ENCODE measurements at regions of chr16 and their contacts with region 1.

Region 1: GRCh38 chr16:11356573-11357331 is 11.5 kb downstream of the RMI2 start:
- DNase-seq: peak in 4 of 5 donors; percentile 40 to 48 (median 44)
- H3K4me3 ChIP-seq: no peak overlapping the region
- H3K4me3 Mint-ChIP-seq: no peak overlapping the region
- H3K27ac ChIP-seq: no peak overlapping the region
- H3K27ac Mint-ChIP-seq: peak overlapping the region in 4 of 7 donors; percentile 11 to 56 (median 38)
- H3K4me1 ChIP-seq: peaks cover 47% of the 10 kb centered on the region
- H3K4me1 Mint-ChIP-seq: peaks cover 37 to 74% (median 50%) of the 10 kb centered on the region in 4 donors
- H3K27me3 ChIP-seq: no peaks in the 10 kb centered on the region
- H3K27me3 Mint-ChIP-seq: peaks cover 4 to 16% of the 10 kb centered on the region in 2 donors

Region 2: DNA sequence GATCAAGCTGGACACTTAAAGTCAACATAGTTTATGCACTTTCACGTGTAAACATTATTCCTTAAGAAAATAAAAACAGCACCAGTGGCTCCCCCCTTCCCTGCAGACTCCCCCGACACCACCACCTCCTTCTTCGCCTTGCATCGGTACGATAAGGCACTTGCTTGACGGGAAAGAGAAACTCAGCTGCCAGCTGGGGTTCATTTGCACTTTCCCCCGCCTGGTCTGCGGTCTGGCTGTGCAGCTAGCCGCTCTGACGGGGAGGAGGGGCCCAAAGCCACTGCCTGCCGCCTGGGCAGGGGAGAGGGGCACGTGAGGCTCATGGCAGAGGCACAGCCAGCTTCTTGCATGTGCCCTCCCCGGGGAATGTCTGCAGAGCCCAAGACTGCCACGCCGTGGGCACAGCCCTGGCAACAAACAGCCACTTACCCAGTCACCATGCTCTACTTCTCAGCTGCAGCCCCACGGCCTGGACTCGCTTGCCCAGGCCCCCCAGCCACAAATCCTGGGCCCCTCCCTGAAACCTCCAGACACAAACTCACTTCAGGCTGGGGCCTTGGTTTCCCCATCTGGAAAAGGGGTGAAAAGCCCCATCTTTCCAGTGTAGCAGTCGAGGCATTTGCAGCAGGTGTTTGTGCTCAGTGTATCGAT is 59.1 kb before region 1 on chr16:
- CTCF ChIA-PET with region 1: interaction called, 9 read pairs
- POLR2A ChIA-PET with region 1: interaction called, 3 read pairs
- intact Hi-C with region 1: loop called (anchors 1 kb)
- DNase-seq: peak; percentile 59 to 82 (median 62)
- H3K4me3 ChIP-seq: peak overlapping the region in 1 of 2 donors; percentile 29
- H3K4me3 Mint-ChIP-seq: peak overlapping the region; percentile 68 to 86 (median 78)
- H3K27ac ChIP-seq: no peak overlapping the region
- H3K27ac Mint-ChIP-seq: peak overlapping the region; percentile 6 to 74 (median 46)
- H3K4me1 ChIP-seq: peaks cover 16% of the 10 kb centered on the region
- H3K4me1 Mint-ChIP-seq: peaks cover 12 to 16% (median 13%) of the 10 kb centered on the region in 4 donors
- H3K27me3 ChIP-seq: no peaks in the 10 kb centered on the region
- H3K27me3 Mint-ChIP-seq: peaks cover 0 to 2% of the 10 kb centered on the region in 2 donors

Region 3: DNA sequence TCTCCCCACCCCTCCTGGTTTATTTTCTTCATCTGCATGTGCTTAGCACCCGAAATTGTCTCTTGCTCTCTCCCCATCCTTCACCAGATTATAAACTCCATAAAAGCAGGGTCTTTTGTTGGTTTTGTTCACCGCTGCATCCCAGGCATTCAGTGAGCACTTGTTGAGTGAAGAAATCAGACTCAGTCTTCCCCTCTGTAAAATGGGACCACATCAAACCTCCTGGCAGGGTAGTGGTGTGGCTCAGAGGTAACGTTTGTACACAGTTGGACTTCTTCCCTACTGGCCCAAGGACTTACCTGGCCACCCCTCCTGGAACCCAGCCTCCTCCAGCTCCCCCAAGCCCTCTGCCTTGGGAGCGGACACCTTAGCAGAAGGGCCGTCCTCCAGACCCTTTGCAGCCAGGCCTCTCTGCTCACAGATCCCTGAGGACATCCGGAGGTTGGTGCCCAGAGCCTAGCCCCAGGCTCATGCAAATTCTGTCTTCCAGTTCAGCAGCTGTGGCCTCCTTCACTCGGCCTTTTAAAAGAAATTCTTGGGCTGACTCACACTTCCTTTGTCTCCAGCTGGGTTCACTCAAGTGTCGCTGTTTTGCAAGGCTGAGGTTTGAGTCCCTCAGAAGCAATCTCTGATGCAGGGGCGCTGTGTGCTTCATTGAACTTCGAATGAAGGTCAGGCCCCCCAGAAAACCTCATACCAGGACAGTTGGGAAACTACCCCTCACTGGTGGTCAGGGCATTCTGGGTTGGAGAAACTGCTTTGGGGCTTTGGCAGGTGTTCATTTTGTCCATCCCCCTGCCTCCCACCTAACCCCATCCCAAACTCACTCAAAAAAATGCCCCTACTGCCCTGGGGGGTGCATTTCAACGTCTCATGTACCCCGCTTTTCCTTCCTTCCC is 28.3 kb before region 1 on chr16:
- CTCF ChIA-PET with region 1: interaction called, 10 read pairs
- POLR2A ChIA-PET with region 1: interaction called, 3 read pairs
- intact Hi-C with region 1: loop called (anchors 2 kb)
- DNase-seq: peak; percentile 22 to 64 (median 37)
- H3K4me3 ChIP-seq: no peak overlapping the region
- H3K4me3 Mint-ChIP-seq: peak overlapping the region in 7 of 8 donors; percentile 48 to 76 (median 67)
- H3K27ac ChIP-seq: no peak overlapping the region
- H3K27ac Mint-ChIP-seq: peak overlapping the region; percentile 4 to 77 (median 65)
- H3K4me1 ChIP-seq: peaks cover 24% of the 10 kb centered on the region
- H3K4me1 Mint-ChIP-seq: peaks cover 24 to 42% (median 29%) of the 10 kb centered on the region in 4 donors
- H3K27me3 ChIP-seq: no peaks in the 10 kb centered on the region
- H3K27me3 Mint-ChIP-seq: no peaks in the 10 kb centered on the region

Region 4: DNA sequence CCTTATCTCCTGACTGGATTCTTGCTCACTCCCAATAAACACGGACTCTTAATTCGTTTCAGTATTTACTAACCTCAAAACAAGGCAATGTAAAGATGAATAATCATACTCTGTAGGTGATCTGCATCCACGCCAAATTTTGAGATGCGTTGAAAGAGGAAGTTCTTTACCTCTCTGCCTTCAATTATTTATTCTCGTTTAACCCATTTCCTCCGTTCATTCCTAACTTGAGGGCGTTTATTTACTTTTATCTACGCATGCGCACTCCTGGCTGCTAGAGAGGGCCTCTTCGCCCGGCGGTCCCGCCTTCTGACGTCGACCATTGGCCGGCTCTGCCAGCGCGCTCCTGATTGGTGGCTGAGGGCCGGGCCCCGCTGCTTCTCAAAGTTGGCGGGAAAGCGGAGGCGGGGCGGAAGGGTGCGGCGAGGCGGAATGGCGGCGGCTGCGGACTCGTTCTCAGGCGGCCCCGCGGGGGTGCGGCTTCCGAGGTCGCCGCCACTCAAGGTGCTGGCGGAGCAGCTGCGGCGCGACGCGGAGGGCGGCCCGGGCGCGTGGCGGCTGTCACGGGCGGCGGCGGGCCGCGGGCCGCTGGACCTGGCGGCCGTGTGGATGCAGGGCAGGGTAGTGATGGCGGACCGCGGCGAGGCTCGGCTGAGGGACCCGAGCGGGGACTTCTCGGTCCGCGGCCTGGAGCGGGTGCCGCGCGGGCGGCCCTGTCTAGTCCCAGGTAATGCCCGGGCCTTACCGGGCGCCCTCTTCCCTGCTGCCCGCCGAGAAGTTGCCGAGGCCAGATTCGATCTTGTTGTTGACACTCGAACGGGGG is 11.5 kb before region 1 on chr16 and contains the start of gene RMI2:
- CTCF ChIA-PET with region 1: interaction called, 19 read pairs
- POLR2A ChIA-PET with region 1: interaction called, 5 read pairs
- intact Hi-C with region 1: loop called (anchors 1 kb)
- DNase-seq: peak; percentile 93 to 97 (median 95)
- H3K4me3 ChIP-seq: peak within 1 kb of the TSS; percentile 49 to 84
- H3K4me3 Mint-ChIP-seq: peak within 1 kb of the TSS; percentile 83 to 91 (median 89)
- H3K27ac ChIP-seq: no peak within 1 kb of the TSS
- H3K27ac Mint-ChIP-seq: peak within 1 kb of the TSS; percentile 12 to 89 (median 78)
- H3K4me1 ChIP-seq: peaks cover 11% of the 10 kb centered on the region
- H3K4me1 Mint-ChIP-seq: peaks cover 5 to 10% (median 7%) of the 10 kb centered on the region in 4 donors
- H3K27me3 ChIP-seq: no peaks in the 10 kb centered on the region
- H3K27me3 Mint-ChIP-seq: no peaks in the 10 kb centered on the region
- total RNA-seq, gene RMI2: 1.5 to 1.8 TPM

Region 5: GRCh38 chr16:11546608-11547061 is 189.9 kb after region 1 on chr16:
- CTCF ChIA-PET with region 1: no interaction called
- POLR2A ChIA-PET with region 1: no interaction called
- intact Hi-C with region 1: no loop called
- DNase-seq: no peak
- H3K4me3 ChIP-seq: no peak overlapping the region
- H3K4me3 Mint-ChIP-seq: peak overlapping the region in 1 of 8 donors; percentile 9
- H3K27ac ChIP-seq: no peak overlapping the region
- H3K27ac Mint-ChIP-seq: peak overlapping the region in 1 of 7 donors; percentile 47
- H3K4me1 ChIP-seq: no peaks in the 10 kb centered on the region
- H3K4me1 Mint-ChIP-seq: peaks cover 4 to 14% (median 9%) of the 10 kb centered on the region in 4 donors
- H3K27me3 ChIP-seq: no peaks in the 10 kb centered on the region
- H3K27me3 Mint-ChIP-seq: no peaks in the 10 kb centered on the region

Measured in CD4-positive, alpha-beta memory T cell (primary cell).